ENCODE measurements at regions of chr1 and their contacts with region 1.

Region 1: DNA sequence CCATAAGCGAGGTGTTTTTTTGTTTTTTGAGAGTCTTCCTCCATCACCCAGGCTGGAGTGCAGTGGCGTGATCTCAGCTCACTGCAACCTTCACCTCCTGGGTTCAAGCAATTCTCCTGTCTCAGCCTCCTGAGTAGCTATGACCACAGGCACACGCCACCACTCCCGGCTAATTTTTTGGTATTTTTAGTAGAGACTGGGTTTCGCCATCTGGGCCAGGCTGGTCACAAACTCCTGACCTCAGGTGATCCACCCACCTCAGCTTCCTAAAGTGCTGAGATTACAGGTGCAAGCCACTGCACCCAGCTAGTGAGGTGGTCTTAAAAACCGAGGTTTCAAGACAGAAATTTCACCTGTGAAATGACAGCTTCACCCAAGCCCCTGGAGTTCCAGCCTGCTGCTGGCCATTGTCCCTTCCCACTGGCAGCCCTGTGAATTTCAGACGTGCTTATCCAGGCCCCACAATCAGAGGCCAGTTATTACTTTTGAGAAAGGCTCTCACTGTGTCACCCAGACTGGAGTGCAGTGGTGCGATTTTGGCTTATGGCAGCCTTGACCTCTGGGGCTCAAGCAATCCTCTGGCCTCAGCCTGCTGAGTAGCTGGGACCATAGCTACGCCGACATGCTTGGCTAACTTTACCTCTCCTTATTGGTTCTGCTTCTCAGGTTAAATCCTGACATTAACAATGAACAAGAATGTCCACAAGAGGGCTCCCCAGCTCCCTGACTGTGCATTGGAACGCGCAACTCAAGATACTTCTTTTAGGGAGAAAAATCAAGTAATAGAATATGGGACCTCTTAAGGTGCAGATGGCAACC is 19.4 kb downstream of the ENO1 start:
- DNase-seq: peak; percentile 67
- ATAC-seq: peak; percentile 55
- H3K4me3 Mint-ChIP-seq: peak overlapping the region; percentile 15
- H3K27ac Mint-ChIP-seq: peak overlapping the region; percentile 71
- H3K4me1 Mint-ChIP-seq: peaks cover 31% of the 10 kb centered on the region
- H3K27me3 Mint-ChIP-seq: no peaks in the 10 kb centered on the region

Region 2: DNA sequence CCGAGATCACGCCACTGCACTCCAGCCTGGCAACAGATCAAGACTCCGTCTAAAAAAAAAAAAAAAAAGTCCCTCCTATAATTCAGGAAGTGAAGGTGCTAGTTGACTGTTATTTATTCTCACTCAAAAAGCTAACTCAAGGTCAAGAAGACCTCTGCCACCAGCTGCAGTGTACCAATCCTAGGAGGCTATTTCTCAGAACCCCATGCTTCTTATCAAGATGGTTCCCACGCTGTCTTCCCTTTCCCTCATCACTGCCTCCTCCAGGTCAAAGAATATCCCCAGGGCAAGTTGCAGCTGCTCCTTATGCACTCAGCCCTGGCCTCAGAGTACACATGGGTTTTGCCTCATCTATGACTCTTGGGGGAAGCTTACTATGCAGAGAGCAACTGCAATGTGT is 95.2 kb before region 1 on chr1:
- CTCF ChIA-PET with region 1: no interaction called
- POLR2A ChIA-PET with region 1: no interaction called
- intact Hi-C with region 1: no loop called
- DNase-seq: no peak
- ATAC-seq: no peak
- H3K4me3 Mint-ChIP-seq: no peak overlapping the region
- H3K27ac Mint-ChIP-seq: no peak overlapping the region
- H3K4me1 Mint-ChIP-seq: peaks cover 12% of the 10 kb centered on the region
- H3K27me3 Mint-ChIP-seq: no peaks in the 10 kb centered on the region

Region 3: GRCh38 chr1:8873506-8874229 is 14.6 kb after region 1 on chr1:
- CTCF ChIA-PET with region 1: interaction called, 13 read pairs
- POLR2A ChIA-PET with region 1: interaction called, 9 read pairs
- intact Hi-C with region 1: loop called (anchors 1 kb)
- DNase-seq: peak; percentile 92
- ATAC-seq: peak; percentile 68
- H3K4me3 Mint-ChIP-seq: peak overlapping the region; percentile 90
- H3K27ac Mint-ChIP-seq: peak overlapping the region; percentile 99
- H3K4me1 Mint-ChIP-seq: peaks cover 69% of the 10 kb centered on the region
- H3K27me3 Mint-ChIP-seq: no peaks in the 10 kb centered on the region

Region 4: GRCh38 chr1:9110669-9111356 is 251.7 kb after region 1 on chr1:
- CTCF ChIA-PET with region 1: no interaction called
- POLR2A ChIA-PET with region 1: no interaction called
- intact Hi-C with region 1: no loop called
- DNase-seq: peak; percentile 93
- ATAC-seq: peak; percentile 75
- H3K4me3 Mint-ChIP-seq: no peak overlapping the region
- H3K27ac Mint-ChIP-seq: no peak overlapping the region
- H3K4me1 Mint-ChIP-seq: peaks cover 5% of the 10 kb centered on the region
- H3K27me3 Mint-ChIP-seq: no peaks in the 10 kb centered on the region

Region 5: DNA sequence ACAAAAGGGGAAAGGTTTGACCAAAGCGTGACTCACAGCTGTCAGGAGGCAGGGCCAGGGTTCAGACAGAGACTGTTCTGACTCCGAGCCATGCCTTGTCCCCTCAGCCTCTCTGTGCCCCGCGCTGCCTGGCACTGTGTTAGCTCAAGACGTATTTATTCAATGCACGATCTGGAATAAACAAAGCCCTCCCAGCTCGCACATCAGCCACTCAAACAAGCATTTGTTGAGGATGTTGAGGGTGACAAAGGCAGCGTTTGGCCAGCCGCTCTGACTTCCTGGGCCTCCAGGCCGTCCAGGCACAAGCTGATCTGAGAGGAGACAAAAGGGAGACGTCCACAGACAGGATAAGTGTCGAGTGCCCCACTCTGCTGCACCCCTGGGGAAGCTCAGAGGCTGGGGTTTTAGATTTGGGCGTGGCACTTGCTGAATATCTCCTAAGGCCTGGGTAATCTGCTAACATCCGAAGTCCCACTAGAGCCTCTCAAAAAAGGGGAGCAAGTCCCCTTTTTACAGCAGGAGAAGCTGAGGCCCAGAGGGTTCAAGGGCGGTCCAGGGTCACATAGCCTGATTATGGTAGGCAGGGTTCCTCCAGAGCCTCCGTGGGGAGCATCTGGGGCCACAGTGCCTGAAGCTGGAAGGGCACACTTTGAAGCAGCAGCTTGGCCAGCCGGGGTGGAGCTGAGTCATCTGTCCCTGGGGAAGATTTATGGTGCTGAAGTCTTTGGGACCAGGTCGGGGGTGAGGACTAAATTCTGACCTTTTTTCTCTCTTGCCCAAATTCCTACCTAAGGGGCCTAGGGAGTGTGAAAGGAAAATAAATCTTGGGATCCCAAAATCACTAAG is 529.5 kb after region 1 on chr1:
- CTCF ChIA-PET with region 1: no interaction called
- POLR2A ChIA-PET with region 1: no interaction called
- intact Hi-C with region 1: no loop called
- DNase-seq: no peak
- ATAC-seq: no peak
- H3K4me3 Mint-ChIP-seq: no peak overlapping the region
- H3K27ac Mint-ChIP-seq: no peak overlapping the region
- H3K4me1 Mint-ChIP-seq: peaks cover 5% of the 10 kb centered on the region
- H3K27me3 Mint-ChIP-seq: no peaks in the 10 kb centered on the region

Measured in activated CD4-positive, alpha-beta T cell treated with anti-CD3 and anti-CD28 coated beads for 36 hours (primary cell).